PC-9 (cell line): ENCODE measurements at regions of chr14 and their contacts with region 1.

Region 1: GRCh38 chr14:103576371-103577024 is 13.7 kb downstream of the COA8 start:
- DNase-seq: peak; percentile 97
- H3K4me3 ChIP-seq: no peak overlapping the region
- H3K27ac ChIP-seq: peak overlapping the region; percentile 40
- H3K4me1 ChIP-seq: peaks cover 24% of the 10 kb centered on the region
- H3K27me3 ChIP-seq: no peaks in the 10 kb centered on the region
- CTCF ChIP-seq: no peak

Region 2: GRCh38 chr14:103500148-103500990 is 76.1 kb before region 1 on chr14:
- CTCF ChIA-PET with region 1: no interaction called
- POLR2A ChIA-PET with region 1: no interaction called
- intact Hi-C with region 1: no loop called
- DNase-seq: peak; percentile 64 to 90
- H3K4me3 ChIP-seq: no peak overlapping the region
- H3K27ac ChIP-seq: no peak overlapping the region
- H3K4me1 ChIP-seq: no peaks in the 10 kb centered on the region
- H3K27me3 ChIP-seq: no peaks in the 10 kb centered on the region
- CTCF ChIP-seq: peak; percentile 100

Region 3: DNA sequence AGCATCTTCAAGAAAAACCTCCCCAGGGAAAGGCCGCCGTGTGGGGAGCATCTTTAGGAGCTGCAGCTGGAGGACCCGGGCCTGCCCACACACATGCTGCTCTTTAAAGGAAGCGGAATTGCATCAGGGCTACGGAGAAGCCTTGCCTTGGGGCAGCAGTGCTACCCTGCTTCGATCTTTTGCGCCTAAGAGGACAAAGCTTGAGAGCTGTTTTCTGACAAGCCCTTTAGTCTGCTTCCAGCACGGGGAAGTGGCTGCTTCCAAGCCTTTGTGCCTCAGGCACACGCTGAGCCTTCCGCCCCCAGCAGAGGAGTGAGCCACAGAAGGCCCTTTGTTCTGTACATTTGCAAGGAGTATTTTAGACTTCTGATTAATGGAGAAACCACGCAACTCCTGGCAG is 17.8 kb after region 1 on chr14:
- CTCF ChIA-PET with region 1: interaction called, 4 read pairs
- POLR2A ChIA-PET with region 1: no interaction called
- intact Hi-C with region 1: loop called (anchors 2 kb)
- DNase-seq: peak; percentile 91 to 100
- H3K4me3 ChIP-seq: peak overlapping the region; percentile 9; the same call in 1 of the 2 replicates
- H3K27ac ChIP-seq: peak overlapping the region; percentile 77
- H3K4me1 ChIP-seq: peaks cover 42% of the 10 kb centered on the region
- H3K27me3 ChIP-seq: no peaks in the 10 kb centered on the region
- CTCF ChIP-seq: no peak

Region 4: GRCh38 chr14:103679351-103679750 is 102.9 kb after region 1 on chr14:
- CTCF ChIA-PET with region 1: interaction called, 3 read pairs
- POLR2A ChIA-PET with region 1: no interaction called
- intact Hi-C with region 1: loop called (anchors 2 kb)
- DNase-seq: no peak
- H3K4me3 ChIP-seq: no peak overlapping the region
- H3K27ac ChIP-seq: no peak overlapping the region
- H3K4me1 ChIP-seq: no peaks in the 10 kb centered on the region
- H3K27me3 ChIP-seq: no peaks in the 10 kb centered on the region
- CTCF ChIP-seq: peak; percentile 72

Region 5: GRCh38 chr14:103808403-103809001 is 232.0 kb after region 1 on chr14:
- CTCF ChIA-PET with region 1: interaction called, 11 read pairs
- POLR2A ChIA-PET with region 1: no interaction called
- intact Hi-C with region 1: no loop called
- DNase-seq: peak; percentile 49 to 69
- H3K4me3 ChIP-seq: no peak overlapping the region
- H3K27ac ChIP-seq: no peak overlapping the region
- H3K4me1 ChIP-seq: no peaks in the 10 kb centered on the region
- H3K27me3 ChIP-seq: no peaks in the 10 kb centered on the region
- CTCF ChIP-seq: peak; percentile 92

Region 6: GRCh38 chr14:103989964-103990363 is 413.5 kb after region 1 on chr14:
- CTCF ChIA-PET with region 1: no interaction called
- POLR2A ChIA-PET with region 1: no interaction called
- intact Hi-C with region 1: loop called (anchors 10 kb)
- DNase-seq: no peak
- H3K4me3 ChIP-seq: no peak overlapping the region
- H3K27ac ChIP-seq: no peak overlapping the region
- H3K4me1 ChIP-seq: peaks cover 16% of the 10 kb centered on the region
- H3K27me3 ChIP-seq: no peaks in the 10 kb centered on the region
- CTCF ChIP-seq: no peak